ENCODE measurements at regions of chr19 and their contacts with region 1.

Region 1: GRCh38 chr19:43519436-43520088 is 7.4 kb downstream of the ETHE1 start:
- DNase-seq: peak; percentile 64 to 85 (median 80)
- ATAC-seq: peak; percentile 97
- H3K4me3 ChIP-seq: no peak overlapping the region
- H3K4me3 Mint-ChIP-seq: peak overlapping the region in 8 of 10 donors; percentile 2 to 22 (median 6)
- H3K27ac ChIP-seq: no peak overlapping the region
- H3K27ac Mint-ChIP-seq: peak overlapping the region in 8 of 9 donors; percentile 10 to 87 (median 65)
- H3K4me1 ChIP-seq: peaks cover 4 to 5% of the 10 kb centered on the region in 2 donors
- H3K4me1 Mint-ChIP-seq: peaks cover 9 to 23% (median 18%) of the 10 kb centered on the region in 7 donors
- H3K27me3 ChIP-seq: no peaks in the 10 kb centered on the region
- H3K27me3 Mint-ChIP-seq: no peaks in the 10 kb centered on the region

Region 2: DNA sequence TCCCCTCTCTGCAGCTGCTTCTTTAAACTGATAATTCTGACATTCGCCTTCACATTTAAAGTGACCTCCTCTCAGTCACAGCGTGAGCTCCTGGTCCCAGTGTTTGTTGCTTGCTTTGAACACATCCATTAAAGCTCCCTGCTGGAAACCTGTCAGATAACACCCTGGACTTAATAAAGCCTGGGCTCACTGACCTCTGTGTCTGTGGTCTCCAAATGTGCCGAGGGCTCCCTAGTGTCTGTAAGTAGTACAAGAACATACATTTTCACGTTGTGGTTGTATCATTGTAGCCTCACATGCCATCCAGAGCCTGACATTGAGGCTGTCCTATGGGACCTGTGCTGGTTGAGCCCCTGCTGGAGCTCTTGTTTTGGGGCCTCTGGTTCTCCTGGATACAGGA is 311.6 kb before region 1 on chr19:
- CTCF ChIA-PET with region 1: no interaction called
- POLR2A ChIA-PET with region 1: no interaction called
- intact Hi-C with region 1: loop called in 1 of 2 experiments (anchors 5 kb)
- DNase-seq: no peak
- ATAC-seq: no peak
- H3K4me3 ChIP-seq: no peak overlapping the region
- H3K4me3 Mint-ChIP-seq: no peak overlapping the region
- H3K27ac ChIP-seq: no peak overlapping the region
- H3K27ac Mint-ChIP-seq: no peak overlapping the region
- H3K4me1 ChIP-seq: no peaks in the 10 kb centered on the region
- H3K4me1 Mint-ChIP-seq: no peaks in the 10 kb centered on the region
- H3K27me3 ChIP-seq: no peaks in the 10 kb centered on the region
- H3K27me3 Mint-ChIP-seq: peaks cover 0 to 28% (median 19%) of the 10 kb centered on the region in 5 donors

Region 3: DNA sequence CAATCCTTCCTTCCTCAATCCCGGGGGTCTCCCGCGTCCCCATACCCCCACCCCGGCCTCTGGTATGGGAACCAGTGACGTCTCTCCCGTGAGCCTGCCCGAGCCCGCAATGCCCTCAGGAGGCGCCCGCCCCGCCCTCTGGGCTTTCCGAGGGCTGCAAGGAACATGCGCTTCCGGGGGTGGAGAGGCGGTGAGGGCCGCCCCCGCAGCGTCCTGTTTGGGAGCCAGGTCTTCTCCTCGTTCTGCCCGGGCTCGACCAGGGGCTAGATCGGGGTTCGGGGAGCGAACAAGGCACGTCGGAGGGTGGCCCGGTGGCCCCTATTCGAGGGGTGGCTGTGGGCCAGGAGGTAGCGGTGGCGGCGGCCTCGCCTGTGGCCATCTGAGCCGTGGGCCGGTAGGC is 111.5 kb before region 1 on chr19:
- CTCF ChIA-PET with region 1: no interaction called
- POLR2A ChIA-PET with region 1: no interaction called
- intact Hi-C with region 1: no loop called
- DNase-seq: no peak
- ATAC-seq: no peak
- H3K4me3 ChIP-seq: no peak overlapping the region
- H3K4me3 Mint-ChIP-seq: no peak overlapping the region
- H3K27ac ChIP-seq: no peak overlapping the region
- H3K27ac Mint-ChIP-seq: no peak overlapping the region
- H3K4me1 ChIP-seq: no peaks in the 10 kb centered on the region
- H3K4me1 Mint-ChIP-seq: no peaks in the 10 kb centered on the region
- H3K27me3 ChIP-seq: no peaks in the 10 kb centered on the region
- H3K27me3 Mint-ChIP-seq: peaks cover 0 to 10% (median 0%) of the 10 kb centered on the region in 5 donors

Region 4: GRCh38 chr19:43438291-43439096 is 81.1 kb before region 1 on chr19:
- CTCF ChIA-PET with region 1: interaction called, 250 read pairs
- POLR2A ChIA-PET with region 1: interaction called, 15 read pairs
- intact Hi-C with region 1: loop called (anchors 1 kb)
- DNase-seq: peak in 2 of 9 donors; percentile 19 to 21
- ATAC-seq: peak; percentile 4
- H3K4me3 ChIP-seq: peak overlapping the region; percentile 33
- H3K4me3 Mint-ChIP-seq: peak overlapping the region; percentile 49 to 77 (median 64)
- H3K27ac ChIP-seq: peak overlapping the region; percentile 72
- H3K27ac Mint-ChIP-seq: peak overlapping the region; percentile 81 to 99 (median 93)
- H3K4me1 ChIP-seq: peaks cover 23 to 30% of the 10 kb centered on the region in 2 donors
- H3K4me1 Mint-ChIP-seq: peaks cover 29 to 75% (median 62%) of the 10 kb centered on the region in 7 donors
- H3K27me3 ChIP-seq: no peaks in the 10 kb centered on the region
- H3K27me3 Mint-ChIP-seq: peaks cover 0 to 2% (median 0%) of the 10 kb centered on the region in 5 donors

Region 5: DNA sequence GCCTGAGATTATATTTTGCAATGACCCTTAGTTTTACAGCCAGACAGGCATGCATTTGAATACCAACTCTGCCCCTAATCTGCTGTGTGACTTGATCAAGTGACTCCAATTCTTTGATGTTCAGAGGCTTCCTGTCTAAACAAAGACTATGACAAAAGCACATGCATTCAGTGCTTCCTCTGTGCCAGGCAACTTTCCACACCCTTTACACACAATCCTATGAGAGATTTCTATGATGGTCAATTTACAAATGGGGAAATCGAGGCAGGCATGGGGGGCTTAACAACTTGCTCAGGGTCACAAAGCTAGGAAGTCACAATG is 50.4 kb before region 1 on chr19:
- CTCF ChIA-PET with region 1: interaction called, 10 read pairs
- POLR2A ChIA-PET with region 1: interaction called, 8 read pairs
- intact Hi-C with region 1: loop called in 1 of 2 experiments (anchors 1 kb)
- DNase-seq: peak in 7 of 9 donors; percentile 68 to 80 (median 76)
- ATAC-seq: peak; percentile 56
- H3K4me3 ChIP-seq: peak overlapping the region; percentile 4
- H3K4me3 Mint-ChIP-seq: peak overlapping the region; percentile 10 to 82 (median 64)
- H3K27ac ChIP-seq: peak overlapping the region; percentile 93
- H3K27ac Mint-ChIP-seq: peak overlapping the region; percentile 82 to 99 (median 98)
- H3K4me1 ChIP-seq: peaks cover 19 to 55% of the 10 kb centered on the region in 2 donors
- H3K4me1 Mint-ChIP-seq: peaks cover 33 to 91% (median 62%) of the 10 kb centered on the region in 7 donors
- H3K27me3 ChIP-seq: no peaks in the 10 kb centered on the region
- H3K27me3 Mint-ChIP-seq: no peaks in the 10 kb centered on the region

Region 6: DNA sequence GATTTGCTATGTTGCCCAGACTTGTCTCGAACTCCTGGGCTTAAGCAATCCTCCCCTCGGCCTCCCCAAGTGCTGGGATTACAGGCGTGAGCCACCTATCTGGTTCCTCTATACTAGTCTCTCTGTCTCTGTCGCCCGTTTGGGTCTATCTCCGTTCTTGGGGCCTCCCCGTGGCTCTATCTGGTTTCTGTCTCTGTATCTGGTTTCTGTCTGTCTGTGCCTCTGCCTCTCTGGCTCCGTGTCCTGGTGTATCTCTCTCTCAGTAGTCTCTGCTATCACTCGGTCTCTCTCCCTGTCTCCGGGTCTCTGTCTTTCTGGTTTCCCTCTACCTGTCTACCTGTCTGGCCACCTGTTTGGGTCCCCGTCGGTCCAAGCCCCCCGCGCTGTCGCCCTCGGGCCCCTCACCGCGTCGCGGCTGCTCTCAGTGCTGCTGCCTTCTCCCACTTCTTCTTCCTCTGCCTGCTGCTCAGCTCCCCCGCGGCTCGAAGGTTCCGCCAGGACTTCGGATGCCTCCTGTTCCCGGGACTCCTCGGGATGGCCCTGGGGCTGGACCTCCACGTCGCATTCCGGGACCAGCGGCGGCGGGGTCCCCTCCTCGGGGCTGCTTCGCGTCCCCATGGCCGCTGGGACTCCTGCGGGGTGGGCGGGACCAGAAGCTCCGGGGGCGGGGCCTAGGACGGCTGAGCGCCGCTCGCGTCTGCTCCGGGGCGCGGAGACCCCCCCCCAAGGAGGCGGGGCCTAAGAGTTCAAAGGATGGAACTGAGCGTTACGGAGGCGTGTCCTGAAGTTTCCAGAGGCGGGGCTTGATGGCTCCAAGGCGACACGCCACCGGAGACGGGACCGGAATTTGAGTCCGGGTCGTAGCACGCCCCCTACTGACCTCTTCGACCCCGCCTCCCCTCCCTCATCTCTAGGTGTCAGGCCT is 15.8 kb before region 1 on chr19:
- CTCF ChIA-PET with region 1: interaction called, 11 read pairs
- POLR2A ChIA-PET with region 1: interaction called, 6 read pairs
- intact Hi-C with region 1: loop called (anchors 1 kb)
- DNase-seq: peak; percentile 93 to 99 (median 98)
- ATAC-seq: peak; percentile 99
- H3K4me3 ChIP-seq: peak overlapping the region; percentile 98
- H3K4me3 Mint-ChIP-seq: peak overlapping the region; percentile 90 to 98 (median 92)
- H3K27ac ChIP-seq: peak overlapping the region; percentile 96
- H3K27ac Mint-ChIP-seq: peak overlapping the region; percentile 90 to 100 (median 96)
- H3K4me1 ChIP-seq: peaks cover 5 to 18% of the 10 kb centered on the region in 2 donors
- H3K4me1 Mint-ChIP-seq: peaks cover 25 to 59% (median 39%) of the 10 kb centered on the region in 7 donors
- H3K27me3 ChIP-seq: no peaks in the 10 kb centered on the region
- H3K27me3 Mint-ChIP-seq: no peaks in the 10 kb centered on the region